ENCODE measurements at regions of chr17 and their contacts with region 1.

Region 1: GRCh38 chr17:9291912-9292560 is 270.7 kb downstream of the NTN1 start:
- DNase-seq: peak; percentile 55 to 82
- ATAC-seq: peak; percentile 89
- H3K4me3 ChIP-seq: no peak overlapping the region
- H3K27ac ChIP-seq: peak overlapping the region; percentile 23 to 61
- H3K4me1 ChIP-seq: peaks cover 3 to 4% of the 10 kb centered on the region in 2 donors
- H3K27me3 ChIP-seq: no peaks in the 10 kb centered on the region

Region 2: DNA sequence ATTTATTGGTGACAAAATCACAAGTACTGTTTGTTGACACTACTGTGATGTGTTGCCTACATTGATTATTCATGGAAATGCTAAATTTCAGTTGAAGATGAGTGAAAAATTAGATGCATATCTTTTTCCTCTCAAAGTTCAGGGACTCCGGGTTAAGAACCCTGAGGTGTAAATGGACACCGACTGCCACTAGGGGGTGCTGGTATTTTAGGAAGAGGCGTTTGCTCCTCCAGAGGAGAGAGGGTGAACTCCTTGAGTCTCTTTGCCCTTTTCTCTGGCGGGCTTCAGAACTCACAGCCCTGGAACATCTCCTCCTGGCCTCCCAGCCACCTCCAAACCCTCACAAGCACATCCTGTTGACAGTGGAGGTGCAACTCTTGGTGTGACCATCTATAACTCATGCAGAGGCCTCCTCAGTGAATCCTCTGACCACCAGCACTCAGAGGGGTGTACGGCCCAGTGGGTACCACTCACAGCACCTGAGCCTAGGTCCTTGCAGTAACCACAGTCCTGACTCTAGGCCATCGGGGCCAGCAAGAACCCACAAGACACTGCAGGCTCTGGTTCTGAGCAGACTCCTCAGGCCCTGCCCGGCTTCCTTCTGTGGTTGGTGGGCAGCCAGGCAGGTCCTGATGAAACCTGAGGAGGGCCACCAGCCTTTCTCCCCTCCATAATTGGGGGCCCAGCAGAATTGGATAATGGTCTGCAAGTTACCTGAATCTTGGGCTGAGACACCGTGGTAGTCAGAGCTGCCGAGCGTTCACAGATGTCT is 300.3 kb before region 1 on chr17:
- intact Hi-C with region 1: loop called (anchors 5 kb)
- DNase-seq: peak; percentile 80 to 85
- ATAC-seq: peak; percentile 74
- H3K4me3 ChIP-seq: no peak overlapping the region
- H3K27ac ChIP-seq: no peak overlapping the region
- H3K4me1 ChIP-seq: no peaks in the 10 kb centered on the region
- H3K27me3 ChIP-seq: no peaks in the 10 kb centered on the region

Region 3: GRCh38 chr17:8997994-8998628 is 293.9 kb before region 1 on chr17:
- intact Hi-C with region 1: loop called (anchors 5 kb)
- DNase-seq: peak; percentile 74 to 85
- ATAC-seq: no peak
- H3K4me3 ChIP-seq: no peak overlapping the region
- H3K27ac ChIP-seq: no peak overlapping the region
- H3K4me1 ChIP-seq: no peaks in the 10 kb centered on the region
- H3K27me3 ChIP-seq: no peaks in the 10 kb centered on the region

Region 4: DNA sequence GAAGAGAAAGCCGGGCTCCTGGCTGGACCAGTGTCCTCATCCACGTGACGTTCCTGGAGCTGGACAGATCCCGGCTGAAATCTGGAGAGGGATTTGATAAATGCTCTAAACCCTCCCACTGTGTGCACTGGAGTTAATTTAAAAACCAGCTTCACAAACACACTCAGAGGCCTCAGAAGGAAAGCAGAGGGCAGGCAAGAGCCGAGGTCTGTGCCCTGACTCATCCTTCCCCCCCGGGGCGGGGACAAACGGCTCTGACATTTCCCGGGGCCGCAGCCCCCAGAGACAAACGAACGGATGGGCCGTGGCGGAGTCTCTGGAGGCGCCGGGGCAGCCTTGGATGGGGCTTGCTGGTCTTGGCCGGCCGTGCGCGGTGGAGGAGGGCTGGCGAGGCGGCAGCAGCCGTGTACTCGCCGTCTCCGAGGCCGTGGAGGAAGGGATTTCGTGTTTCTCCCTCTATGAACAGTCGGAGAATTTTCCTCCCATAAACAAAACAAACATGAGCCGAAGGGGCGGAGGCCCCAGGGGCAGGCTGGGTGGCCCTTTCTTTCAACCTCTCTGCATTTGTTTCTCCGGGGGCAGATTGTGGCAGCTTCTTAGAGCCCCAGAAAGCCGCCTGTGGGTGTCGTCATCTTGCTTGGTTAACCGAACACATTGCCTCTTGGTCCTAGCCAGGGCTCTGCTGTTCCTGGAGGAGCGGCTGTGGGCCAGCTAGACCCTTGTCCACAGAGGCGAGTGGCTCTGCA is 176.4 kb before region 1 on chr17:
- intact Hi-C with region 1: loop called (anchors 10 kb)
- DNase-seq: peak; percentile 84 to 95
- ATAC-seq: peak; percentile 90
- H3K4me3 ChIP-seq: peak overlapping the region in 1 of 2 donors; percentile 41
- H3K27ac ChIP-seq: peak overlapping the region; percentile 54 to 96
- H3K4me1 ChIP-seq: no peaks in the 10 kb centered on the region
- H3K27me3 ChIP-seq: no peaks in the 10 kb centered on the region

Region 5: DNA sequence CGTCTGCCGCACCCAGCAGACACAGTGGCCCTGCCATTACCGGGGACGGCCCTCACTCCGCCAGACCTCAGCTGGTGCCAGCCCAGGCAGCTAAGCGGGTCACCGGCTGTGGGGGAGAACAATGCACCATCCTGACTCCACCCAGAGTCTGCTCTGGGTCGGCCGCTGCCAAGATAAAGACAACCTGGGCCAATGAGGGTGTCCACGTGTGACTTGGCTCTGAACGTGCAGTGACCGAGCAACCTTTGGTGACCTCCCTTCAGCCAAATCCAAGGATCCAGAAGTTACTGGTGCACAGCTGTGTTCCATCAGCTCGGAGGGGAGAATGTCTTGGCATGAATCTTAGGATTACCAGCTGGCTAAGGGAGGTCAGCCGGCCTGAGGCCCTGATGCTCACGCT is 114.8 kb before region 1 on chr17:
- intact Hi-C with region 1: loop called in 1 of 2 experiments (anchors 10 kb)
- DNase-seq: peak in 1 of 2 donors; percentile 57
- ATAC-seq: peak; percentile 59
- H3K4me3 ChIP-seq: no peak overlapping the region
- H3K27ac ChIP-seq: no peak overlapping the region
- H3K4me1 ChIP-seq: no peaks in the 10 kb centered on the region
- H3K27me3 ChIP-seq: no peaks in the 10 kb centered on the region

Region 6: GRCh38 chr17:9200699-9201359 is 91.2 kb before region 1 on chr17:
- intact Hi-C with region 1: loop called in 1 of 2 experiments (anchors 10 kb)
- DNase-seq: no peak
- ATAC-seq: no peak
- H3K4me3 ChIP-seq: no peak overlapping the region
- H3K27ac ChIP-seq: no peak overlapping the region
- H3K4me1 ChIP-seq: no peaks in the 10 kb centered on the region
- H3K27me3 ChIP-seq: no peaks in the 10 kb centered on the region

Region 7: DNA sequence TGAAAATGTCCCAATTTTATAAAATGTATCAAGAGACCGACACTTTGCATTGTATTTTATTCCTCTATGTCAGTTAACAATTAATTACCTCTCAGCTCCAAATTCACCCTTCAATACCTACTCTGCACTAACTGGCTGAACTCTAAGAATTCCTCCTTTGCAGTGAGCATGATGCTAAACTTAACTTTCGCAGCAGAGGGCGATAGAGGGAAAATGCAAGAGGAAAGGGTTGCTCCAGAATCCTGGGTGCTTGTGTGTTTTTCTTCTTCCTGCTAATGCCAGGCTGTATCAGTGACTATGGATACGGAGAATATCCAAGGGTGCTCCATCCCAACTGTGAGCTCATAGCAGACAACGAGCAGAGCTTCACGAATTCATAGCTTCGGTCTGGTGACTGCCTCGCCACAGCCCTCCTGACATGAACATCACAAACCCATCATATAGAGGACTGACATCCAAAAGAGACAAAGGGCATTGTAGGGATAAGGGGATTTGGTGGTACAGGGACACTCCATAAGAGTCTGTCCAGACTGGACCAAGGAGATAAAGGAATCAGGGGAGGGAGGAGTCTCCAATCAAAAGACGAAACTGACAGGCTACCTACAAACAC is 110.7 kb after region 1 on chr17:
- intact Hi-C with region 1: no loop called
- DNase-seq: no peak
- ATAC-seq: no peak
- H3K4me3 ChIP-seq: no peak overlapping the region
- H3K27ac ChIP-seq: no peak overlapping the region
- H3K4me1 ChIP-seq: no peaks in the 10 kb centered on the region
- H3K27me3 ChIP-seq: no peaks in the 10 kb centered on the region

Region 8: GRCh38 chr17:9522074-9522473 is 230.0 kb after region 1 on chr17:
- intact Hi-C with region 1: loop called in 1 of 2 experiments (anchors 5 kb)
- DNase-seq: no peak
- ATAC-seq: no peak
- H3K4me3 ChIP-seq: no peak overlapping the region
- H3K27ac ChIP-seq: no peak overlapping the region
- H3K4me1 ChIP-seq: no peaks in the 10 kb centered on the region
- H3K27me3 ChIP-seq: no peaks in the 10 kb centered on the region

Measured in aorta (tissue), 5 donors.